ENCODE measurements at regions of chr3 and their contacts with region 1.

Region 1: GRCh38 chr3:122564155-122564912 is at the starts of genes DTX3L and PARP9:
- H3K4me3 Mint-ChIP-seq: peak within 1 kb of the TSS; percentile 87
- H3K27ac Mint-ChIP-seq: peak within 1 kb of the TSS; percentile 97
- H3K4me1 Mint-ChIP-seq: peaks cover 86% of the 10 kb centered on the region
- H3K27me3 Mint-ChIP-seq: no peaks in the 10 kb centered on the region

Region 2: DNA sequence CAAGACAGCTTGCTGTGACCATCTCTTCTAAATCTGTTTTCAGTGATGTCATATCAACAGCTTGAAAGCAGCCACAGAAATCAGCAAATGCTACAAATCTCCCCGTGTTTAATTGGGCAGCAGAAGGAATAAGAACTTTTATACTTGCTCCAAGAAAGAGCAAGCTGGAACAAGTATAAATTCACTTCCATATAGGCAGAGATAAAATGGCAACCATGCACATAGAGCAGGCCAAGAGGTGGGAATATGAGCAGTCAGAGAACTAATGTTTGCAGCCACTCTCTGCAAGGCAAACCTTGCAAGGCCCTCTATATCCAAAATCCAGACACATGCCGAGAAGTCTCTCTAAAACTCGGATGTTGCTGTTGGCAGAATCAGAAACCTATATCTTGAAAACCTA is 16.3 kb before region 1 on chr3:
- intact Hi-C with region 1: no loop called
- H3K4me3 Mint-ChIP-seq: no peak overlapping the region
- H3K27ac Mint-ChIP-seq: no peak overlapping the region
- H3K4me1 Mint-ChIP-seq: no peaks in the 10 kb centered on the region
- H3K27me3 Mint-ChIP-seq: no peaks in the 10 kb centered on the region

Region 3: DNA sequence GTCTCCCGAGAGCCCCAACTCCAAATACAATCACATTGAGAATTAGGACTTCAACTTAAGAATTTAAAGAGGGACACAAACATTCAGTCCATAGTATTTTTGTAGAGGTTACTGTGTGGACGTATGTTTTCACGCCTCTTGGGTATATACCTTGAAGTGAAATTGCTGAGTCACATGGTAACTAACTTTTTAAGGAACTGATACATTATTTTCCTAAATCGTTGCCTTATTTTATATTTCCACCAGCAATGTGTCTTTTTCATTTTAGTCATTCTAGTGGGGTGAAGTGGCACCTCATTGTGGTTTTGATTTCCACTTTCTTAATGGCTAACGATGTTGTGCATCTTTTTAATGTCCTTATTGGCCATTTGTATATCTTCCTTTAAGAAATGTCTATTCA is 25.0 kb after region 1 on chr3:
- intact Hi-C with region 1: no loop called
- H3K4me3 Mint-ChIP-seq: no peak overlapping the region
- H3K27ac Mint-ChIP-seq: no peak overlapping the region
- H3K4me1 Mint-ChIP-seq: no peaks in the 10 kb centered on the region
- H3K27me3 Mint-ChIP-seq: no peaks in the 10 kb centered on the region

Region 4: DNA sequence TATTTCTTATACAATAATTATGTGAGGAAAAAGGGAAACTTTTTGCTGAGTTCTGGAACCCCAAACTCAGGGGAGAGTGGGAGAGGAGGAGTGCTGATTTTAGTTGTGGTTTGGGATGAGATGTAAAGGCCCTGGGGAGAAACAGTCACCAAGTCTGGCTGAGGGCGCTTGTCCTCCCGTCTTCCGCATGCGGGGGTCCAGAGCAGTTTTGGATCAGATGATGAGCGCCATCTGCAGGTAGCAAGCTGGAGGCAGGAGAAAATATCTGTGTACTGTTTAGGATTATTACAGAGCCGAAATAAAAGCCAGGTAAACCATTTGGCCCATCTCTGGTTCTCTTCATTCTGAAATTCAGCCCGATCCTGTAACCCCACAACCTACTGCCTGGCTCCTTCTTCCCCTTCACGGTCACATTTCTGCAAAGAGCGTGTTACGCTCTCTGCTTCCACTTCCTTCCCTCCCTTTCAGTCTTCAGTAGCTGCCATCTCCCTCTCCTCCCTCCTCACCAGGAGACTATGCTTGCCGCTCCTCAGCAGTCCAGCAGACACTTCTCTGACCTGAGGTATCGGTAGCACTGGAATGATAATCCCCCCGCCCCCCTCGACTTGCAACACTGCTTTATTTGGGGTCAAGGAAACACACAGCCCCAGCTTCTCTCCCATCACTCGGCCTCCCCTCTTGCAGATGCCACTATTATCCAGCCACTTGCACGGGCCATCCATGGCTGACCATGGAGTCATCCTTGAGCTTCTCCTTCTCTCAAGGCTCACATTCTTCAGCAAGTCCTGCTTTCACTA is 114.9 kb after region 1 on chr3:
- intact Hi-C with region 1: loop called (anchors 1 kb)
- H3K4me3 Mint-ChIP-seq: peak overlapping the region; percentile 94
- H3K27ac Mint-ChIP-seq: peak overlapping the region; percentile 94
- H3K4me1 Mint-ChIP-seq: peaks cover 57% of the 10 kb centered on the region
- H3K27me3 Mint-ChIP-seq: no peaks in the 10 kb centered on the region

Region 5: GRCh38 chr3:122824465-122825381 is 260.4 kb after region 1 on chr3:
- intact Hi-C with region 1: loop called (anchors 10 kb)
- H3K4me3 Mint-ChIP-seq: peak overlapping the region; percentile 11
- H3K27ac Mint-ChIP-seq: peak overlapping the region; percentile 88
- H3K4me1 Mint-ChIP-seq: peaks cover 61% of the 10 kb centered on the region
- H3K27me3 Mint-ChIP-seq: no peaks in the 10 kb centered on the region

Region 6: DNA sequence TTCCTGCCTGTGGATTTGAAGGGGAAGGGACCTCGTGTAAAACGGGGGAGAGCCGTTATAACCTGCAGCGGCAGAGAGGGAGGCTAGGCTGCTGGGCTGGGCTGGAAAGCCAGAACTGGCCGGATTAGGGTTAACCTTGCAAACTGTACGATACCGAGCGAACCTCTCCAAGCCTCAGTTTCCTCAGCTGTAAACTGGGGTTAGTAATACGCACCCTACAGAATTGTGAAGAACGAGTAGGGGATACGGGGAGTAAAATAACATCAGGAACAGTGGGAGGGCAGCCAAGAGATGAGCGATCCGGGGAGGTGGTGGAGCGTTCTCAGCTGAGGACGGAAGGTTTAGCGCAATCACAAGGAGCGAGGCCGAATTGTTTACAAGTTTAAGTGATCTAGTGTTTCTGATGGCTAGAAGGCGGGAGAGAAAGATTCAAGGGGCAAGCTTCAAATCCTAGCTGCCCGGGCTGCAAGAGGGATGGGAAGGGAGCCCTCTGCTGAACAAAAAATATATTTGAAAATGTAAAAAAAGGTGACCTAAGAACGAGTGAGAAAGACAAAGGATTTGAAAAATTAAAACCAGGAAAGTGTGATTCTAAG is 464.0 kb after region 1 on chr3:
- intact Hi-C with region 1: loop called (anchors 5 kb)
- H3K4me3 Mint-ChIP-seq: peak overlapping the region; percentile 67
- H3K27ac Mint-ChIP-seq: no peak overlapping the region
- H3K4me1 Mint-ChIP-seq: peaks cover 22% of the 10 kb centered on the region
- H3K27me3 Mint-ChIP-seq: peaks cover 62% of the 10 kb centered on the region

Measured in dendritic cell treated with granulocyte-macrophage colony-stimulating factor and Interleukin-4, amounts not matched to agents 40 ng/mL and 50 ng/mL, for 4 days (primary cell).